ENCODE measurements at regions of chr2 and their contacts with region 1.

Region 1: GRCh38 chr2:84846041-84846663 is 34.7 kb downstream of the TRABD2A start:
- DNase-seq: peak; percentile 67 to 84 (median 78)
- H3K4me3 ChIP-seq: peak overlapping the region; percentile 11 to 15
- H3K4me3 Mint-ChIP-seq: peak overlapping the region; percentile 31 to 84 (median 74)
- H3K27ac ChIP-seq: peak overlapping the region; percentile 61
- H3K27ac Mint-ChIP-seq: peak overlapping the region; percentile 92 to 99 (median 97)
- H3K4me1 ChIP-seq: peaks cover 99% of the 10 kb centered on the region
- H3K4me1 Mint-ChIP-seq: peaks cover 81 to 98% (median 90%) of the 10 kb centered on the region in 4 donors
- H3K27me3 ChIP-seq: no peaks in the 10 kb centered on the region
- H3K27me3 Mint-ChIP-seq: no peaks in the 10 kb centered on the region

Region 2: GRCh38 chr2:84832772-84833461 is 13.2 kb before region 1 on chr2:
- CTCF ChIA-PET with region 1: interaction called, 19 read pairs
- POLR2A ChIA-PET with region 1: interaction called, 40 read pairs
- intact Hi-C with region 1: no loop called
- DNase-seq: peak in 2 of 5 donors; percentile 15 to 38
- H3K4me3 ChIP-seq: peak overlapping the region in 1 of 2 donors; percentile 39
- H3K4me3 Mint-ChIP-seq: peak overlapping the region; percentile 52 to 84 (median 78)
- H3K27ac ChIP-seq: peak overlapping the region; percentile 59
- H3K27ac Mint-ChIP-seq: peak overlapping the region in 4 of 7 donors; percentile 93 to 96 (median 94)
- H3K4me1 ChIP-seq: peaks cover 87% of the 10 kb centered on the region
- H3K4me1 Mint-ChIP-seq: peaks cover 27 to 49% (median 39%) of the 10 kb centered on the region in 4 donors
- H3K27me3 ChIP-seq: no peaks in the 10 kb centered on the region
- H3K27me3 Mint-ChIP-seq: no peaks in the 10 kb centered on the region

Region 3: DNA sequence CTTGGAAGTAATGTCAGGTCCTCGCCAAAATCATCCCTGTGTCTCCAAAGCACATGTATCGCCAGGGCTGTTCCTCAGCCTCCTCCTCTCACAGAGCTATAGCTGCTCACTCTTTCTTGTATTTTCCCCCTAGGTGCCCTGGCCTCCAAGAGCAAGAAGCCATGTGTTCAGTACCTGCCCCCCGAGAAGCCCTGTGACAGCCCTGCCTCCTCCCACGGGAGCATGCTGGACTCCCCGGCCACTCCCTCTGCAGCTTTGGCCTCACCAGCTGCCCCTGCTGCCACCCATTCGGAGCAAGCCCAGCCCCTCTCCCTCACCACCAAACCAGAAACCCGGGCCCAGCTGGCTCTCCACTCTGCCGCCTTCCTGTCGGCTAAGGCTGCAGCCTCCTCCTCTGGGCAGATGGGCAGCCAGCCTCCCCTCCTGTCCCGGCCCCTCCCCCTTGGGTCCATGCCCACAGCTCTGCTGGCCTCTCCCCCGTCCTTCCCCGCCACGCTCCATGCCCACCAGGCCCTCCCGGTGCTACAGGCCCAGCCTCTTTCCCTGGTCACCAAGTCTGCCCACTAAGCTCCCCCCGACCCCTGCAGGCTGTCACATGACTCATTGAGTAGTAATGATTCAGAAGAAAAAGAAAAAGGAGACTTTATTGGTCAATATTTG is 462.9 kb after region 1 on chr2:
- CTCF ChIA-PET with region 1: no interaction called
- POLR2A ChIA-PET with region 1: no interaction called
- intact Hi-C with region 1: no loop called
- DNase-seq: peak in 1 of 5 donors; percentile 41
- H3K4me3 ChIP-seq: peak overlapping the region in 1 of 2 donors; percentile 14
- H3K4me3 Mint-ChIP-seq: peak overlapping the region; percentile 80 to 95 (median 87)
- H3K27ac ChIP-seq: peak overlapping the region; percentile 46
- H3K27ac Mint-ChIP-seq: peak overlapping the region; percentile 73 to 97 (median 97)
- H3K4me1 ChIP-seq: peaks cover 36% of the 10 kb centered on the region
- H3K4me1 Mint-ChIP-seq: peaks cover 19 to 48% (median 39%) of the 10 kb centered on the region in 4 donors
- H3K27me3 ChIP-seq: no peaks in the 10 kb centered on the region
- H3K27me3 Mint-ChIP-seq: peaks cover 0 to 2% of the 10 kb centered on the region in 2 donors